Esophagus muscularis mucosa (tissue), 4 donors: ENCODE measurements at regions of chr16 and their contacts with region 1.

Region 1: GRCh38 chr16:21184834-21185233 is 26.4 kb downstream of the LDAF1 start:
- DNase-seq: no peak
- H3K4me3 ChIP-seq: no peak overlapping the region
- H3K27ac ChIP-seq: no peak overlapping the region
- H3K4me1 ChIP-seq: peaks cover 0 to 9% (median 7%) of the 10 kb centered on the region in 4 donors
- H3K27me3 ChIP-seq: no peaks in the 10 kb centered on the region
- CTCF ChIP-seq: no peak
- EP300 ChIP-seq: no peak
- POLR2A ChIP-seq: no peak

Region 2: GRCh38 chr16:20976576-20976975 is 208.3 kb before region 1 on chr16:
- intact Hi-C with region 1: no loop called
- DNase-seq: no peak
- H3K4me3 ChIP-seq: no peak overlapping the region
- H3K27ac ChIP-seq: no peak overlapping the region
- H3K4me1 ChIP-seq: no peaks in the 10 kb centered on the region
- H3K27me3 ChIP-seq: no peaks in the 10 kb centered on the region
- CTCF ChIP-seq: no peak
- EP300 ChIP-seq: no peak
- POLR2A ChIP-seq: no peak

Region 3: GRCh38 chr16:21116148-21116693 is 68.6 kb before region 1 on chr16:
- intact Hi-C with region 1: no loop called
- DNase-seq: peak; percentile 45
- H3K4me3 ChIP-seq: peak overlapping the region in 1 of 4 donors; percentile 27
- H3K27ac ChIP-seq: no peak overlapping the region
- H3K4me1 ChIP-seq: no peaks in the 10 kb centered on the region
- H3K27me3 ChIP-seq: no peaks in the 10 kb centered on the region
- CTCF ChIP-seq: no peak
- EP300 ChIP-seq: no peak
- POLR2A ChIP-seq: no peak

Region 4: DNA sequence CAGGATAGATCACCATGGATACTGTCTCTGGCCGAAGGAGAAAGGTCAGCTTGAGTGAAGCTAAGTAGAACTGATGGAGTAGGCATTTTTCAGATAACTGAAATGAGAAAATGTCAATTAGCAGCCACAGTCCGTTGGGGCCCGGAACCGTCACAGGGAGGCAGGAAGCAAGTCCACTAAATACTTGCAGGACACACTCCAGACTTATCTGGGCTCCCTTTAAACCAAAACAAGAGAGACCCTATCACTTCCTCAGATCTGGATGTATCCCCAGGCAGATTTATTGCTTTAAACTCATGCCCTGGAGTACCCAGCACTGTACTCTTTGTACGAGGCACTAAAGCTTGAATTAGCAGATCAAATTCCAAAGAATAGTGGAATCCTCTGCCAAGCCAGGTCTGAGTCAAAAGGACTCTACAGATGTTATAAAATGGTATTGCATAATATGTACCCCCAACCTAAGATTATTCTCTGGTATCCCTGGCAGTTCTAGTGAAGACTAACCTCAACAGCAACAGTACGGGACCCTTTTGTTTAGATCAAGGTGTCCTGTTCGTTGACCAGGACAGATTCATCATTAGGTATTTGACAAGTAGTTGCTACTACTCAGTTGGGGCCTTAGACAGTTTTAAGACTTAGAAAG is 18.4 kb after region 1 on chr16:
- intact Hi-C with region 1: no loop called
- DNase-seq: no peak
- H3K4me3 ChIP-seq: no peak overlapping the region
- H3K27ac ChIP-seq: no peak overlapping the region
- H3K4me1 ChIP-seq: no peaks in the 10 kb centered on the region
- H3K27me3 ChIP-seq: peaks cover 0 to 11% (median 0%) of the 10 kb centered on the region in 4 donors
- CTCF ChIP-seq: no peak
- EP300 ChIP-seq: no peak
- POLR2A ChIP-seq: no peak

Region 5: DNA sequence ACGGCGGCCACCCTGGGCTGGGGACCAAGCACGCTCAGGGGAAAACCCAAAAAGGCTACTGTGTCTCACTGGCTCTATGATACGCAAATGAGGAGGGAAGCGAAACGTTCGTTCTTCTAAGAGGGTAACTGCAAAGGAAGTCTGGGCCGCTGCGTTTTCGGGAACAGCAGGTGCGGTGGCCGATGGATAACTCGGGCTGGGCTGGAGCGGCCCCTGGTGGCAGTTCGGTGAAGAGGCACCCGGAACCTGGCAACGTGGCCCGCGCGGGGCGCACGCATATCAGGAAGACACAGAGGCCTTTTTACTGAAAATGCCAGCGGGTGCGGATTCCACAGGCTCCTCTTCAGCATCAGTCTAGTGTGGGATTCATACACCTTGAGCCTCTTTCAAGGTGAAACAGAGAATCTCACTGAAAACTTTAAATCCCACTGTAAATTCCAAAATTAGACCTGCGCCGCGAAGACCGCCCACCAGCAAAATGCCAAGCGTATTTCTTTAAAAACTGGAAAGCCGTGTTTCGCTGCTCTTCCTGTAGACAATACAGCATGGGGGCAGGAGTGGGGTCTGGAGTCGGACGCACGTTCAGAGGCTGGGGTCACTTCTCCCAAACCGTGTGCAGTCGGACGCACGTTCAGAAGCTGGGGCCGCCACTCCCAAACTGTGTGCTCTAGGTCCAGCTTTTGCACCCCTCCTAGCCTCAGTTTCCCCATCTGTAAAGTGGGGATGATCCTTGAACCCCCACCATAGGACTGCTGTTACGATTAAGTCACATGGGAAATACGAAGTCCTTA is 370.2 kb after region 1 on chr16:
- intact Hi-C with region 1: loop called (anchors 10 kb)
- DNase-seq: peak; percentile 98
- H3K4me3 ChIP-seq: peak overlapping the region; percentile 17 to 33 (median 26)
- H3K27ac ChIP-seq: no peak overlapping the region
- H3K4me1 ChIP-seq: peaks cover 9 to 29% (median 22%) of the 10 kb centered on the region in 4 donors
- H3K27me3 ChIP-seq: peaks cover 0 to 11% (median 0%) of the 10 kb centered on the region in 4 donors
- CTCF ChIP-seq: peak; percentile 90 to 99 (median 92)
- EP300 ChIP-seq: no peak
- POLR2A ChIP-seq: no peak